ENCODE measurements at regions of chr21 and their contacts with region 1.

Region 1: DNA sequence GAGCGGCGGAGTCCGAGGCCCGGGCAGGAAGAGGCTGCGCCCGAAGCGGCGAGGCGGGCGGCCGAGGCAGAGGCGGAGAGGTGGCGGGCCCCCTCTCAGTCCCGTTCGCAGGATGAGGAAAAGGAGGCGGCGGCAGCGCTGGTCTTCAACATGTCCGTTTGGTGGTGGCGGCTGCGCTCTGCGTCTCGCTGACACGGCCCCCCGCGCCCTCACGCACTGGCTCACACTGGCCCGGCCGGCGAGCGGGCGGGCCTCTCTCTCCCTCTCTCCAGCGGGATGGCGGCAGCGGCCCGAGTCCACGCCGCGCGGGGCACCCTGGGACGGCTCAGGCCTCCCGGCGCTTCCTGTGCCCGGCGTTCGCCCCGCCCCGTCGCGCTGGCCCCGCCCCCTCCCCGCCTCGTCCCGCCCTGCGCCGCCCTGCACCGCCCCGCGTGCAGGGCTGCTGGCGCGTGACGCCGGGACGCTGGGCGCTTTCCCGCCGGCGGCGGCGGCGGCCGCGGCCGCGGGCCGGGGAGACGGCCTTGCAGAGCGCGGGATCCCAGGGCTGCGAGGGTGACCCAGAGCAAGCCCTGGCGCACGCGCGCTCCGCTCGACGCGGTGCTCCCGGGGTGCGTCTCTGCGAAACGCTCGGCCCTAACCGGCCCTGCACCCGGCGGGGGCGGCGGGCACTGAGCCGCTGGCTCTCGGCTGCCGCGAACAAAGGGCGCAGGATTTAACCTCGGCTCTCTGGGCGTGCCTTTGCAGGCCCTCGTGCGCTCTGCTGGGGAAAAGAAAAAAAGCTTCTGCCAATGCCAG is at the start of gene SCAF4:
- DNase-seq: peak; percentile 89 to 93
- ATAC-seq: peak; percentile 94 to 96 (median 95)
- H3K4me3 ChIP-seq: peak within 1 kb of the TSS; percentile 79 to 100 (median 98)
- H3K27ac ChIP-seq: peak within 1 kb of the TSS; percentile 93 to 98 (median 97)
- H3K4me1 ChIP-seq: peaks cover 6 to 54% (median 49%) of the 10 kb centered on the region in 9 donors
- H3K27me3 ChIP-seq: no peaks in the 10 kb centered on the region
- CTCF ChIP-seq: no peak
- total RNA-seq, gene SCAF4: 18.4 to 22.3 (median 20.5) TPM

Region 2: GRCh38 chr21:31659536-31660258 is 72.3 kb before region 1 on chr21 and contains the start of gene SOD1:
- intact Hi-C with region 1: loop called in 1 of 10 experiments (anchors 5 kb)
- DNase-seq: peak; percentile 96
- ATAC-seq: peak; percentile 96 to 99 (median 98)
- H3K4me3 ChIP-seq: peak within 1 kb of the TSS; percentile 59 to 88 (median 83)
- H3K27ac ChIP-seq: peak within 1 kb of the TSS; percentile 84 to 97 (median 90)
- H3K4me1 ChIP-seq: peaks cover 3 to 47% (median 29%) of the 10 kb centered on the region in 9 donors
- H3K27me3 ChIP-seq: no peaks in the 10 kb centered on the region
- CTCF ChIP-seq: peak in 7 of 9 donors; percentile 13 to 50 (median 29)
- total RNA-seq, gene SOD1: 358 to 456 (median 427) TPM

Region 3: GRCh38 chr21:31665397-31665796 is 66.6 kb before region 1 on chr21:
- intact Hi-C with region 1: loop called in 2 of 10 experiments (anchors 5 kb)
- DNase-seq: no peak
- ATAC-seq: peak in 3 of 8 donors; percentile 37 to 49 (median 47)
- H3K4me3 ChIP-seq: no peak overlapping the region
- H3K27ac ChIP-seq: no peak overlapping the region
- H3K4me1 ChIP-seq: peaks cover 3 to 49% (median 42%) of the 10 kb centered on the region in 9 donors
- H3K27me3 ChIP-seq: no peaks in the 10 kb centered on the region
- CTCF ChIP-seq: no peak

Region 4: DNA sequence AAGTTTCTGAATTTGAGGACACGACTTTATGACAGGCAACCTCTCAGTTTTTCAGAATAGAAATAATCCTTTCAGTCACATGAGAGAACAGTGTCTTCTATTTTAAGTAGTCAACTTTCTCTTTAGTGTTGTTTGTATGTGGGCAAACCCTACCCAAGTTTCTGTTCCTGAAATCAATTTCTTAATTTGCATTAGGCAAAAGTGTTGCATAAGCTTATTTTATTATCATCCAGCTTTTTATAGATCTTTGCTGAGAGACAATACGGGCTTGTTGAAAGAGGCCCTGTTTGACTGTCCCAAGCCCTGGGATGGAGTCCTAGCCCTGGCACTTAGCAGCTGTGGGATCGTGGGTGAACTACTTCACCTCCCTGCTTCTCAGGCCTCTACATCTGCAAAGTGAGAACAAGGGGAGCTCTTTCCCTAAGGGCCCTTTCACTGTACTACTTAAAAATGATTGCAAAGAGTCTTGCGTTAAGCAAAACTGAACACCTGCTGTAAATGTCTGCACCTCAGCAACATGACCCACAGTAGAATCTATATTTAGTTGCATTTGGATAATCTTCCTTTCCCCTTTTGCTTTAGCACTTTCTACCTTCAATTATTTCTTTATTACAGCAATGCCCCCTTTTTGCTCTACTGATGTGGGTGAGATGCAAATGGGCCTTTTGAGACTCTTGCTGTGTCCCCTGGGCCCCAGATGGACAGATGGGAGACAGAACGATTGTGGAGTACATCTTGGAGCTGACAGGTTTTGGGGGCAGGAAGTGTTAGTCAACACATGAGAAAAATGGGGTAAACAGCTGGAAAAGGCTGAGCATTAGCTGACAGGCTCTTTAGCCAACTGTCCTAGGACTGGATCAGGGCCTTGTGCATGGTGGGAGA is 40.9 kb after region 1 on chr21:
- intact Hi-C with region 1: no loop called
- DNase-seq: no peak
- ATAC-seq: no peak
- H3K4me3 ChIP-seq: no peak overlapping the region
- H3K27ac ChIP-seq: no peak overlapping the region
- H3K4me1 ChIP-seq: peaks cover 0 to 11% (median 0%) of the 10 kb centered on the region in 9 donors
- H3K27me3 ChIP-seq: no peaks in the 10 kb centered on the region
- CTCF ChIP-seq: no peak